OCI-LY7 (cell line): ENCODE measurements at regions of chr19 and their contacts with region 1.

Region 1: GRCh38 chr19:58380722-58381466 is at the start of gene ZNF837:
- DNase-seq: peak; percentile 100
- H3K4me3 ChIP-seq: peak within 1 kb of the TSS; percentile 71
- H3K27ac ChIP-seq: peak within 1 kb of the TSS; percentile 56
- H3K4me1 ChIP-seq: peaks cover 32% of the 10 kb centered on the region
- CTCF ChIP-seq: 0 out of 2 replicates have a peak, but pooled peaks have one; percentile 1
- total RNA-seq, gene ZNF837: 1.8 and 3.0 TPM in 2 replicates

Region 2: GRCh38 chr19:58305065-58305931 is 75.6 kb before region 1 on chr19 and contains the start of gene ERVK3-1:
- CTCF ChIA-PET with region 1: no interaction called
- POLR2A ChIA-PET with region 1: no interaction called
- intact Hi-C with region 1: loop called (anchors 1 kb)
- DNase-seq: peak; percentile 98
- H3K4me3 ChIP-seq: peak within 1 kb of the TSS; percentile 94
- H3K27ac ChIP-seq: peak within 1 kb of the TSS; percentile 46
- H3K4me1 ChIP-seq: peaks cover 15% of the 10 kb centered on the region
- CTCF ChIP-seq: no peak
- total RNA-seq, gene ERVK3-1: 61.7 and 79.6 TPM in 2 replicates

Region 3: GRCh38 chr19:58354478-58355030 is 26.3 kb before region 1 on chr19:
- CTCF ChIA-PET with region 1: interaction called, 10 read pairs
- POLR2A ChIA-PET with region 1: no interaction called
- intact Hi-C with region 1: no loop called
- DNase-seq: no peak
- H3K4me3 ChIP-seq: no peak overlapping the region
- H3K27ac ChIP-seq: no peak overlapping the region
- H3K4me1 ChIP-seq: peaks cover 2% of the 10 kb centered on the region
- CTCF ChIP-seq: no peak

Region 4: GRCh38 chr19:58362272-58362994 is 18.5 kb before region 1 on chr19 and contains the start of gene ZNF497:
- CTCF ChIA-PET with region 1: no interaction called
- POLR2A ChIA-PET with region 1: interaction called, 6 read pairs
- intact Hi-C with region 1: loop called (anchors 1 kb)
- DNase-seq: peak; percentile 97
- H3K4me3 ChIP-seq: peak within 1 kb of the TSS; percentile 75
- H3K27ac ChIP-seq: peak within 1 kb of the TSS; percentile 41
- H3K4me1 ChIP-seq: peaks cover 18% of the 10 kb centered on the region
- CTCF ChIP-seq: no peak
- total RNA-seq, gene ZNF497: 2.8 and 3.6 TPM in 2 replicates

Region 5: GRCh38 chr19:58460039-58460438 is 79.1 kb after region 1 on chr19:
- CTCF ChIA-PET with region 1: no interaction called
- POLR2A ChIA-PET with region 1: no interaction called
- intact Hi-C with region 1: no loop called
- DNase-seq: no peak
- H3K4me3 ChIP-seq: no peak overlapping the region
- H3K27ac ChIP-seq: no peak overlapping the region
- H3K4me1 ChIP-seq: peaks cover 6% of the 10 kb centered on the region
- CTCF ChIP-seq: no peak